ENCODE measurements at regions of chr1 and their contacts with region 1.

Region 1: DNA sequence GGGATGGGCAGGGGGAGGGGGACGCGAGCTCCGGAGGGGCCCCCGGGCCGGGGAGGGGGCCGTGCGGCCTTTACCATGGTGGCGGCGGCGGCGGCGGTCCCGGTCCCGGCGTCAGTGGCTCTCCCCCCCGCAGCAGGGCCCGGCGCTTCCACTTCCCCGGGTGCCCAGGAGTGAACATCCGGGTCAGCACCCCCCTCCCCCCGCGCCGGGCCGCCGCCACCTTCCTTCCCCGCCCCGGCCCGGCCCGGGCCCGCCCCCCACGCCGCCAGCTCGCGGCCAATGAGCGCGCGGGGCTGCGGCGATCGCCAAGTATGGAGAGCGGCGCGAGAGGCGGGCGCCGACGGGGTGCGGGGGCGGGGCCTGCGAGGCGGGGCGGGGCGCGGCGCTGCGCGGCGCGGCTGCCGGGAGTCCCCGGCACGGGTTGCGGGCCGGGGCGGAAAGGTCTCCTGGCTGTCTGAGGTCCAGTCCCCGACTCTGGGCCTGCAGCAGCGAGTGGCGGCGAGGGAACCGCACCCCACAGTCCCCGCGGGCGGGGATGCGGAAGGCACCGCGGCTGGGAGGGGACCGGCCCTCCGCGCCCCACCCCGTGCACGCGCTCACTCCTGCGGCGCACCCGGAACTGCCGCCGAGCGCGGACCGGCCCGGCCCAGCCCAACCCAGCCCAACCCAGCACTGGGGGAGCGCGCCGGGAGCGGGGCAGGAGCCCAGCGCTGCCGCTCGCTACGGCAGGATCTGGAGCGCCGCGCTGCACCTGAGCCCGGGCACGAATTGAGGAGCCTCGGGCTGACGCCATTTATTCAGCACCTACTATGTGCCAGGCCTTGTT is at the start of gene CAPZB:
- DNase-seq: peak; percentile 97
- ATAC-seq: peak; percentile 92 to 94
- total RNA-seq, gene CAPZB: 227 to 254 TPM

Region 2: DNA sequence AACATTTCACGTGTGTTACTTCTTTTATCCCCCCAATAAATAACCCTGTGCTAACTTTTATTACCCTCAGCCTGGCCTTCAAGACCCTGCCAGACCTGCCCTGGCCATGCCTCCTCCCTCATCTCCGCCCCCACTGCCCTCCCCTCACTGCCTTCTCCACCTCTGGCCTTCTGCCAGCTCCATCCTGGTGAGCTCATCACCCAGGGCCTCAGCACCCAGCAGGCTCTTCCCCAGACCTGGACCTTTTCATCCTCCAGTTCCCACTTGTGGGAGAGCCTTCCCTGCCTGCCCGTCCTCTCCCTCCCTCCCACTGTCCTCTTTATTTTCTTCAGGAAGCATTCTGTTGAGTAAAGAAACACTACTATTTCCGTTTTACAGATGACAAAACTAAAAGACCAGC is 101.5 kb before region 1 on chr1:
- intact Hi-C with region 1: loop called in 1 of 2 experiments (anchors 5 kb)
- DNase-seq: peak; percentile 67
- ATAC-seq: peak in 1 of 2 donors; percentile 63

Region 3: DNA sequence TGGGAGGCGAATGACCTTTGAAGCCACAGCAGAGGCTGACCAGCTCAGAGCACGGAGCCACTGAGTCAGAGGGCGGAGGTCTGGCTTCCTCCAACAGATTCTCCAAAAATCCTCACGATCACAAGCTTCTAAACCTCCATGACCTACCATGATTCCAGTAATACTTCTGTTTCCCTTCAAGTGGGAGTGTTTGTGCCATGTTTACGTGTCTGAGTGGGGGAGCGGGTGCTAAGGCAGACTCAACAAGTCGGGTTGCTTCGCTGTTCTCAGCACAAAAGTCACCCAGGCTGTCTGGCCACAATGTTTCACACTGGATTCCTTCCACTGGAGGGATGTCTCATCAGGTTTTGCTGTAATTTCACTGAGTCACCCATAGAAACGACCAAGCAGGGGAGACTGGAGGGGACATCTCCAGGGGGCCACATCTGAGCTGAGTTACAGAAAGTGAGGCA is 87.2 kb before region 1 on chr1:
- intact Hi-C with region 1: loop called in 1 of 2 experiments (anchors 5 kb)
- DNase-seq: no peak
- ATAC-seq: peak in 1 of 2 donors; percentile 52

Region 4: GRCh38 chr1:19596714-19597495 is 111.3 kb after region 1 on chr1:
- intact Hi-C with region 1: loop called (anchors 10 kb)
- DNase-seq: peak; percentile 98
- ATAC-seq: peak; percentile 95 to 97